PC-3 (cell line): ENCODE measurements at regions of chr4 and their contacts with region 1.

Region 1: GRCh38 chr4:25312496-25313200 is at the start of gene ZCCHC4:
- DNase-seq: peak; percentile 83
- ATAC-seq: peak; percentile 92
- H3K4me3 ChIP-seq: peak within 1 kb of the TSS; percentile 91
- H3K27ac ChIP-seq: peak within 1 kb of the TSS; percentile 48
- H3K4me1 ChIP-seq: peaks cover 13% of the 10 kb centered on the region; the same call in 1 of the 2 replicates
- H3K27me3 ChIP-seq: no peaks in the 10 kb centered on the region
- CTCF ChIP-seq: peak; percentile 95
- total RNA-seq, gene ZCCHC4: 6.5 and 6.8 TPM in 2 replicates

Region 2: DNA sequence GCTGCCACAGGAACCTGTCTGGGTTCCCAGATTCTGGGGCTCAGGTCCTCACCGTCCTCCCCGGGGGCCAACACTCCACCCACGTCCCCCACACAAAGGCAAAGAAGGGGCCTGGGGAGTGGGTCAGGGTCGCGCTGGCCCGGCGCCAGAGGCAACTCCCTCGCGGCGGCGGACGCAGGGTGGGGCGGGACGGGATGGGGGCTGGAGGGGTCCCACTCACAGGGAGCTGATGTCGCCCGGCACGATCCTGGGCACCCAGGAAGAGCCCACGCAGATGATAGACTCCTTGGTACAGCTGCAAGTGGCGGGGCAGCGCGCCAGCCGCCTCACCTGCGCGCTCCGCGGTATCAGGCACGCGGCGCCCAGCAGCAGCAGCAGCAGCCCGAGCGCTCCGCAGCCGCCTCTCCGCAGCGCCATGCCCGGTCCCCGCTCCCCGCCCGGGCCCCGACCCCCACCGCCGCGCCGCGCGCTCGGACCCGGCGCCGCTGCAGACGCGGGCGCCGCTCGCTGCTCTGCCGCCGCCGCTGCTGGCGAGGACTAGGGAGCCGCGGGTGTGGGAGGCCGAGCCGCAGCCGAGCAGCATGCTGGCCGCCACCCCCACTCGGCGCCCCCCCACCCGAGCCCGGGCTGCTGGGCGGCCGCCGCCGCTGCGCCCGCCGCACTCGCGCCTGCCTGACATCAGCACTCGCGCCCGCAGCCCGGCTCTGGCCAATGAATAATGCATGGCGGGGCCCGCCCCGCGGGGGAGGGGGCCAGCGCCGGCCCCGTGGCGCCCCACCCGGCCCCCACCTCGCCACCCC is 282.2 kb before region 1 on chr4 and contains the start of gene LGI2:
- CTCF ChIA-PET with region 1: no interaction called
- POLR2A ChIA-PET with region 1: no interaction called
- intact Hi-C with region 1: no loop called
- DNase-seq: peak; percentile 6
- ATAC-seq: peak; percentile 40; the same call in 1 of the 2 replicates
- H3K4me3 ChIP-seq: peak within 1 kb of the TSS; percentile 56; the same call in 1 of the 2 replicates
- H3K27ac ChIP-seq: no peak within 1 kb of the TSS
- H3K4me1 ChIP-seq: no peaks in the 10 kb centered on the region
- H3K27me3 ChIP-seq: peaks cover 27% of the 10 kb centered on the region
- CTCF ChIP-seq: no peak
- total RNA-seq, gene LGI2: 0.18 and 3.4 TPM in 2 replicates

Region 3: GRCh38 chr4:25159884-25160713 is 152.5 kb before region 1 on chr4 and contains the start of gene SEPSECS:
- CTCF ChIA-PET with region 1: interaction called, 5 read pairs
- POLR2A ChIA-PET with region 1: interaction called, 5 read pairs
- intact Hi-C with region 1: loop called (anchors 5 kb)
- DNase-seq: peak; percentile 96
- ATAC-seq: peak; percentile 70
- H3K4me3 ChIP-seq: peak within 1 kb of the TSS; percentile 87
- H3K27ac ChIP-seq: peak within 1 kb of the TSS; percentile 83
- H3K4me1 ChIP-seq: peaks cover 22% of the 10 kb centered on the region
- H3K27me3 ChIP-seq: no peaks in the 10 kb centered on the region
- CTCF ChIP-seq: no peak
- total RNA-seq, gene SEPSECS: 3.1 and 5.2 TPM in 2 replicates

Region 4: DNA sequence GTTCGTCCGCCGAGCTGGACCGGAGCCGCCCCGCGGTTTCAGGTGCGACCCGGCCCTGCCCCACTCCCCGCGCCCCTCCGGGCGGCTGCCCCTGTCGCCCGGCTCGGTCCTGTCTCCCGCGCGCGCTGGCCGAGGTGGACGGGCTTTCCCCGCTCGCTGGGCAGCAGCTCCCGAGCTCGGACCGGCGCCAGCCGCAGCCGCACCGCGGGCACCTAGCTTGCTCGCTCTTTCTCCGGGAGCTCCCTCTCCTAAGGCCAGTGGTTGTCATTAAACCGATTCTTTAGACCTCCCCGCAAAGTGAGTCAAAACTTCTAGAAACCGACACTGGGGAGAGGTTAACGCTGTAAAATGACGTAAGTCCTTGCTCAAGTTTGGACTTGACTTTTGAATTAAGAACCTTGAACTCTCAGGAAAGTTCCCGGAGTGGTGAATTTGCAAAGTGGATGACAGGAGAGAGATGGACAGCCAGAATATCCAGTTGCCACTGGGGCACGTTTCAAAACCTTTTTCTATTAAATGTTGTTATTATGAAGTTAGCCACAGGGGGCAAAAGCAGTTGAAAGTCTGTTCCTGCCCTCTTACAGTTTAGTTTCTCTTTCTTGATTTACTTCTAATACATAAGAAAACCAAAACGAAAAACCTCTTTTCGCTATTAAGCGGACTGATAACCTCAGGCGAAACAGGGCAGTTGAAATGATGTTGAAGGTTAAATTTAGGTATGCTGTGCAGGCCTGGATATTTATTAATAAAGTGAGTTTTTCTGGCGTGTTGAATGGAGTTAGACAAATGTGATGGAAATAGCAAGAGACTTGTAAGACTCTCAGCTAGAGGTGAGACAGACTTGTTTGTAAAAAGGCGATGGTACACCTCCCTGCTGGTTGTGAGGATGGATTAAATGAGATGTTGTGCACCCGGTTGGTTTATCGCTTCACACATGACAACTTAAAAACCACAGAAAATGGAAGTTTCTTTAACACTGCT is 78.0 kb before region 1 on chr4:
- CTCF ChIA-PET with region 1: interaction called, 12 read pairs
- POLR2A ChIA-PET with region 1: interaction called, 3 read pairs
- intact Hi-C with region 1: loop called (anchors 1 kb)
- DNase-seq: peak; percentile 78
- ATAC-seq: peak; percentile 64
- H3K4me3 ChIP-seq: peak overlapping the region; percentile 88
- H3K27ac ChIP-seq: peak overlapping the region; percentile 29
- H3K4me1 ChIP-seq: no peaks in the 10 kb centered on the region
- H3K27me3 ChIP-seq: no peaks in the 10 kb centered on the region
- CTCF ChIP-seq: peak; percentile 53; the same call in 1 of the 2 replicates

Region 5: DNA sequence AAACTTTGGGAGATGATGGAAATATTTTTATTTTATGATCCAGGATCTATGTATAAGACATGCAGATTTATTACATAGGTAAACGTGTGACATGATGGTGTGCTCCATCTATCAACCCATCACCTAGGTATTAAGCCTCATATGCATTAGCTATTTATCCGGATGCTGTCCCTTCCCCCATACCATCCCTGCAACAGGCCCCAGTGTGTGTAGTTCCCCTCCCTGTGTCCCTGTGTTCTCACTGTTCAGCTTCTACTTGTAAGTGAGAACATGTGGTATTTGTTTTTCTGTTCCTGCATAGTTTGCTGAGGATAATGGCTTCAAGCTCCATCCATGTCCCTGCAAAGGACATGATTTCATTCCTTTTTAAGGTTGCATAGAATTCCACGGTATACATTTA is 28.2 kb before region 1 on chr4:
- CTCF ChIA-PET with region 1: interaction called, 8 read pairs
- POLR2A ChIA-PET with region 1: no interaction called
- intact Hi-C with region 1: loop called (anchors 1 kb)
- DNase-seq: no peak
- ATAC-seq: no peak
- H3K4me3 ChIP-seq: no peak overlapping the region
- H3K27ac ChIP-seq: peak overlapping the region; percentile 90
- H3K4me1 ChIP-seq: peaks cover 23% of the 10 kb centered on the region
- H3K27me3 ChIP-seq: no peaks in the 10 kb centered on the region
- CTCF ChIP-seq: no peak

Region 6: DNA sequence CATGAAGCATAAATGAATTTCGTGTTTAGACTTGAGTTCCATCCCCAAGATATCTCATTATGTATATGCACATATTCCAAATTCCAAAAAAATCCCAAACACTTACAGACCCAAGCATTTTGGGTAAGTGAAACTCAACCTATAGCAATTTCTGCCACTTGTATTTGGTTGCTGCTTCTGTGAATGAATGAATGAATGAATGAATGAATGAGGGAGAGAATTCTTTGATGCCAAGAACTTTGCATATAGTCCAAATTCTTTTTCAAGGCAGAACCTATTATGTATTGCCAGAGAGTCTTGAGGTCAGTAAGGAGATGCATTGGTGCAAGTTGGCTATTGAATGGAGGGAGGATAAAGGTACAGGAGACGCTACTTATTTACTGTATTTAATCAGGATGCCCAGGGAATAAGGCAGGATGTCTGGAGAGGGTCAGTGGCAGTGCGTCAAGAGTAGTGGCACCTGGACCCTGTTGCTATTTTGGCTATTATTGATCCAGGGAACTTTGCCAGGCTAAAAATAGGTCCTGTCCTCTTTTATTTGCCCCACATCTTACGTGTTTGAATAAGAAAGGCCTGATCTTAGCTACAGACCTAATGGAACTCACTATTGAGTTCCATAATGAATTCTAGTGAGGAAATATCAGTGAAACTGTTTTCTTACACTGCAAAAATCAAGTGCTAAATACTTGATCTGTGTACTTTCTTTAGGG is 98.3 kb after region 1 on chr4:
- CTCF ChIA-PET with region 1: no interaction called
- POLR2A ChIA-PET with region 1: no interaction called
- intact Hi-C with region 1: no loop called
- DNase-seq: no peak
- ATAC-seq: no peak
- H3K4me3 ChIP-seq: no peak overlapping the region
- H3K27ac ChIP-seq: no peak overlapping the region
- H3K4me1 ChIP-seq: no peaks in the 10 kb centered on the region
- H3K27me3 ChIP-seq: no peaks in the 10 kb centered on the region
- CTCF ChIP-seq: no peak